ENCODE measurements at regions of chr1 and their contacts with region 1.

Region 1: DNA sequence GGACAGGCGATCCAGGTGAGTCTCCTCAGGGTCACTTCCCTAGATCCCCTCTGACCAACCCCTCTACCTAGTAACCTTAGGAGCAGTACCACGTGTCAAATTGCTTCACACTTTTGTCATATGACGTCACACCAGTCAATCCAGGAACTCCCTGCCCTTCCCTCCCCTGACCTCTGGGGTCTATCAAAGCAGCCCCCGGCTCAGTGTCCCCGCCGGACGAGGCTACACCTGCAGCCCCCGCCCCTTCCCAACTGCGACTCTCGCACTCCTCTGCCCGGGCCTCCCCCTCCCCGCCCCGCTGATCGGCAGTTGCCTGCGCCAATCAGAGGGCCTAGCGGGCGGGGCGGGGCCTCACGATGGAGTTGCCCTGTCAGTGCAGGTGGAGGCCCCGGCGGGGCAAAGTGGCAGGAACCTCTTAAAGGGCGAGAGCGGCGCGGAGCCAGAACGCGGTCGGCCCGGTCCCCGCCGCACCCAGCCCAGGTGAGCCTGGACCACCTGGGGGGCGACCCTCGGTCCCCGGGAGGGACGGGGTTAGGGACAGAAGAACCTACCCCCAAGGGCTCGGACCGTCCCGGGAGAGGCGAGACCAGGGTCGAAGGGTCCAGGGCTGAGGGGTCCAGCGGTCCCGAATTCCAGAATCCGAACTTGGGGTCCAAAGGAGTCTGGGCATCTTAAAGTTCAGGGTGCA is 27.5 kb upstream of the EPB41 start:
- DNase-seq: peak; percentile 90 to 94 (median 92)
- H3K4me3 ChIP-seq: peak overlapping the region; percentile 39 to 95
- H3K4me3 Mint-ChIP-seq: peak overlapping the region; percentile 84 to 96 (median 89)
- H3K27ac ChIP-seq: peak overlapping the region; percentile 88
- H3K27ac Mint-ChIP-seq: peak overlapping the region; percentile 93 to 100 (median 98)
- H3K4me1 ChIP-seq: peaks cover 64% of the 10 kb centered on the region
- H3K4me1 Mint-ChIP-seq: peaks cover 45 to 71% (median 61%) of the 10 kb centered on the region in 4 donors
- H3K27me3 ChIP-seq: no peaks in the 10 kb centered on the region
- H3K27me3 Mint-ChIP-seq: peaks cover 0 to 4% of the 10 kb centered on the region in 2 donors

Region 2: GRCh38 chr1:28845786-28846543 is 40.9 kb before region 1 on chr1:
- CTCF ChIA-PET with region 1: no interaction called
- POLR2A ChIA-PET with region 1: no interaction called
- intact Hi-C with region 1: no loop called
- DNase-seq: no peak
- H3K4me3 ChIP-seq: no peak overlapping the region
- H3K4me3 Mint-ChIP-seq: peak overlapping the region in 1 of 8 donors; percentile 37
- H3K27ac ChIP-seq: no peak overlapping the region
- H3K27ac Mint-ChIP-seq: peak overlapping the region in 2 of 7 donors; percentile 46 to 81
- H3K4me1 ChIP-seq: no peaks in the 10 kb centered on the region
- H3K4me1 Mint-ChIP-seq: peaks cover 3 to 7% (median 7%) of the 10 kb centered on the region in 4 donors
- H3K27me3 ChIP-seq: no peaks in the 10 kb centered on the region
- H3K27me3 Mint-ChIP-seq: peaks cover 1 to 8% of the 10 kb centered on the region in 2 donors

Region 3: GRCh38 chr1:28871631-28872401 is 15.1 kb before region 1 on chr1:
- CTCF ChIA-PET with region 1: interaction called, 11 read pairs
- POLR2A ChIA-PET with region 1: no interaction called
- intact Hi-C with region 1: no loop called
- DNase-seq: no peak
- H3K4me3 ChIP-seq: no peak overlapping the region
- H3K4me3 Mint-ChIP-seq: no peak overlapping the region
- H3K27ac ChIP-seq: no peak overlapping the region
- H3K27ac Mint-ChIP-seq: peak overlapping the region in 1 of 7 donors; percentile 30
- H3K4me1 ChIP-seq: no peaks in the 10 kb centered on the region
- H3K4me1 Mint-ChIP-seq: no peaks in the 10 kb centered on the region
- H3K27me3 ChIP-seq: no peaks in the 10 kb centered on the region
- H3K27me3 Mint-ChIP-seq: peaks cover 3 to 9% of the 10 kb centered on the region in 2 donors

Region 4: GRCh38 chr1:28926629-28927265 is 39.9 kb after region 1 on chr1:
- CTCF ChIA-PET with region 1: interaction called, 8 read pairs
- POLR2A ChIA-PET with region 1: interaction called, 26 read pairs
- intact Hi-C with region 1: loop called (anchors 2 kb)
- DNase-seq: peak; percentile 77 to 85 (median 82)
- H3K4me3 ChIP-seq: peak overlapping the region; percentile 0 to 21
- H3K4me3 Mint-ChIP-seq: peak overlapping the region; percentile 56 to 84 (median 76)
- H3K27ac ChIP-seq: peak overlapping the region; percentile 67
- H3K27ac Mint-ChIP-seq: peak overlapping the region; percentile 72 to 97 (median 85)
- H3K4me1 ChIP-seq: peaks cover 93% of the 10 kb centered on the region
- H3K4me1 Mint-ChIP-seq: peaks cover 38 to 71% (median 54%) of the 10 kb centered on the region in 4 donors
- H3K27me3 ChIP-seq: no peaks in the 10 kb centered on the region
- H3K27me3 Mint-ChIP-seq: no peaks in the 10 kb centered on the region

Region 5: DNA sequence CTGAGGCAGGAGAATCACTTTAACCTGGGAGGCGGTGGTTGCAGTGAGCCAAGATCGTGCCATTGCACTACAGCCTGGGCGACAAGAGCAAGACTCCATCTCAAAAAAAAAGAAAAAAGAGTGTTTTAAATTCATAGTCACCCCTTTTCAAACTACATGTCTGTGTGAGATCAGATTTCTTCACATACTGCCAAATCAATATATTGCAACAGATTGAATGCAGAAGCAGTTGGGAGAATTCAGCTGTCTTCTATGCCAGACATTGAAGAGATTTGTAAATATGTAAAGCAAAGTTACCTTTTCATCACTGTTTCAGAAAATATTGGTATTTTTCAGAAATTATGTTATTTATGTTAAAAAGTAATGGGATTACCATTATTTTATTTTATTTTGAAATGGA is 135.7 kb after region 1 on chr1:
- CTCF ChIA-PET with region 1: interaction called, 294 read pairs
- POLR2A ChIA-PET with region 1: no interaction called
- intact Hi-C with region 1: no loop called
- DNase-seq: no peak
- H3K4me3 ChIP-seq: no peak overlapping the region
- H3K4me3 Mint-ChIP-seq: no peak overlapping the region
- H3K27ac ChIP-seq: no peak overlapping the region
- H3K27ac Mint-ChIP-seq: no peak overlapping the region
- H3K4me1 ChIP-seq: no peaks in the 10 kb centered on the region
- H3K4me1 Mint-ChIP-seq: peaks cover 0 to 6% (median 4%) of the 10 kb centered on the region in 4 donors
- H3K27me3 ChIP-seq: no peaks in the 10 kb centered on the region
- H3K27me3 Mint-ChIP-seq: no peaks in the 10 kb centered on the region

Region 6: GRCh38 chr1:29124366-29125236 is 237.7 kb after region 1 on chr1:
- CTCF ChIA-PET with region 1: interaction called, 6 read pairs
- POLR2A ChIA-PET with region 1: interaction called, 3 read pairs
- intact Hi-C with region 1: loop called (anchors 1 kb)
- DNase-seq: peak; percentile 45 to 64 (median 52)
- H3K4me3 ChIP-seq: peak overlapping the region; percentile 52 to 55
- H3K4me3 Mint-ChIP-seq: peak overlapping the region; percentile 60 to 80 (median 74)
- H3K27ac ChIP-seq: peak overlapping the region; percentile 0
- H3K27ac Mint-ChIP-seq: no peak overlapping the region
- H3K4me1 ChIP-seq: peaks cover 25% of the 10 kb centered on the region
- H3K4me1 Mint-ChIP-seq: peaks cover 3 to 21% (median 10%) of the 10 kb centered on the region in 4 donors
- H3K27me3 ChIP-seq: no peaks in the 10 kb centered on the region
- H3K27me3 Mint-ChIP-seq: peaks cover 5 to 19% of the 10 kb centered on the region in 2 donors

Measured in CD4-positive, alpha-beta memory T cell (primary cell).